HepG2 (cell line): ENCODE measurements at regions of chr4 and their contacts with region 1.

Region 1: GRCh38 chr4:25159884-25160713 is at the start of gene SEPSECS:
- DNase-seq: peak; percentile 97
- ATAC-seq: peak; percentile 85
- H3K4me3 ChIP-seq: peak within 1 kb of the TSS; percentile 70 to 84 (median 79)
- H3K27ac ChIP-seq: peak within 1 kb of the TSS; percentile 99
- H3K4me1 ChIP-seq: peaks cover 58% of the 10 kb centered on the region
- H3K27me3 ChIP-seq: no peaks in the 10 kb centered on the region; a peak in 1 of 5 replicates
- CTCF ChIP-seq: peak; percentile 30
- EP300 ChIP-seq: peak in 1 of 2 experiments; percentile 29; a peak in 1 of 4 replicates
- POLR2A ChIP-seq: peak; percentile 81 to 91
- RAD21 ChIP-seq: 0 out of 2 replicates have a peak, but pooled peaks have one; percentile 25
- total RNA-seq, gene SEPSECS: 14.3 and 17.1 TPM in 2 replicates

Region 2: GRCh38 chr4:25123236-25123635 is 36.9 kb before region 1 on chr4:
- CTCF ChIA-PET with region 1: no interaction called
- POLR2A ChIA-PET with region 1: no interaction called
- in situ Hi-C with region 1: no loop called
- intact Hi-C with region 1: no loop called
- DNase-seq: no peak
- ATAC-seq: no peak
- H3K4me3 ChIP-seq: no peak overlapping the region
- H3K27ac ChIP-seq: no peak overlapping the region
- H3K4me1 ChIP-seq: no peaks in the 10 kb centered on the region
- H3K27me3 ChIP-seq: no peaks in the 10 kb centered on the region
- CTCF ChIP-seq: no peak
- EP300 ChIP-seq: no peak
- POLR2A ChIP-seq: no peak
- RAD21 ChIP-seq: no peak

Region 3: DNA sequence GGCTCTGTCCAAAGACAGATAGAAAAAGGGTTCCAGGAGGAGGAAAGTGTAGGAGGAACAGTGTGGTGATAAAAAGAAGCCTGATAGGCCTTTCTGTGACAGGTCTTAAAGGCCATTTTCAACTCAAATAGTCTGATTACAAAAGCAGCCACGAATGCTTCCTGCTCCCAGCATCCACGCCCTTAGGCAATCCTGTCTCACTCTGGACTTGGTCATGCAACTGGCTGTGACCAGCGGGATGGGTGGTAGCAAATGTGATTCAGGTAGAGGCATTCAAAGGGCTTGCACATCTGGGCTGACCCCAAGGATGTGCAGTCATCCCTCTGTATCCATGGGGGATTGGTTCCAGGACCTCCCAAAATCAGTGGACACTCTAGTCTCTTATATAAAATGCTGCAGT is 14.6 kb after region 1 on chr4:
- CTCF ChIA-PET with region 1: no interaction called
- POLR2A ChIA-PET with region 1: interaction called, 23 read pairs
- in situ Hi-C with region 1: no loop called
- intact Hi-C with region 1: no loop called
- DNase-seq: no peak
- ATAC-seq: no peak
- H3K4me3 ChIP-seq: no peak overlapping the region
- H3K27ac ChIP-seq: no peak overlapping the region
- H3K4me1 ChIP-seq: peaks cover 35% of the 10 kb centered on the region
- H3K27me3 ChIP-seq: no peaks in the 10 kb centered on the region
- CTCF ChIP-seq: no peak
- EP300 ChIP-seq: no peak
- POLR2A ChIP-seq: no peak
- RAD21 ChIP-seq: no peak

Region 4: DNA sequence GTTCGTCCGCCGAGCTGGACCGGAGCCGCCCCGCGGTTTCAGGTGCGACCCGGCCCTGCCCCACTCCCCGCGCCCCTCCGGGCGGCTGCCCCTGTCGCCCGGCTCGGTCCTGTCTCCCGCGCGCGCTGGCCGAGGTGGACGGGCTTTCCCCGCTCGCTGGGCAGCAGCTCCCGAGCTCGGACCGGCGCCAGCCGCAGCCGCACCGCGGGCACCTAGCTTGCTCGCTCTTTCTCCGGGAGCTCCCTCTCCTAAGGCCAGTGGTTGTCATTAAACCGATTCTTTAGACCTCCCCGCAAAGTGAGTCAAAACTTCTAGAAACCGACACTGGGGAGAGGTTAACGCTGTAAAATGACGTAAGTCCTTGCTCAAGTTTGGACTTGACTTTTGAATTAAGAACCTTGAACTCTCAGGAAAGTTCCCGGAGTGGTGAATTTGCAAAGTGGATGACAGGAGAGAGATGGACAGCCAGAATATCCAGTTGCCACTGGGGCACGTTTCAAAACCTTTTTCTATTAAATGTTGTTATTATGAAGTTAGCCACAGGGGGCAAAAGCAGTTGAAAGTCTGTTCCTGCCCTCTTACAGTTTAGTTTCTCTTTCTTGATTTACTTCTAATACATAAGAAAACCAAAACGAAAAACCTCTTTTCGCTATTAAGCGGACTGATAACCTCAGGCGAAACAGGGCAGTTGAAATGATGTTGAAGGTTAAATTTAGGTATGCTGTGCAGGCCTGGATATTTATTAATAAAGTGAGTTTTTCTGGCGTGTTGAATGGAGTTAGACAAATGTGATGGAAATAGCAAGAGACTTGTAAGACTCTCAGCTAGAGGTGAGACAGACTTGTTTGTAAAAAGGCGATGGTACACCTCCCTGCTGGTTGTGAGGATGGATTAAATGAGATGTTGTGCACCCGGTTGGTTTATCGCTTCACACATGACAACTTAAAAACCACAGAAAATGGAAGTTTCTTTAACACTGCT is 74.6 kb after region 1 on chr4:
- CTCF ChIA-PET with region 1: no interaction called
- POLR2A ChIA-PET with region 1: interaction called, 30 read pairs
- in situ Hi-C with region 1: no loop called
- intact Hi-C with region 1: loop called (anchors 5 kb)
- DNase-seq: peak; percentile 89
- ATAC-seq: peak; percentile 79
- H3K4me3 ChIP-seq: peak overlapping the region; percentile 84 to 98 (median 91)
- H3K27ac ChIP-seq: peak overlapping the region; percentile 79
- H3K4me1 ChIP-seq: peaks cover 35% of the 10 kb centered on the region
- H3K27me3 ChIP-seq: no peaks in the 10 kb centered on the region; a peak in 1 of 5 replicates
- CTCF ChIP-seq: peak; percentile 33
- EP300 ChIP-seq: no peak
- POLR2A ChIP-seq: peak in 1 of 2 experiments; percentile 42; a peak in 1 of 4 replicates
- RAD21 ChIP-seq: no peak

Region 5: DNA sequence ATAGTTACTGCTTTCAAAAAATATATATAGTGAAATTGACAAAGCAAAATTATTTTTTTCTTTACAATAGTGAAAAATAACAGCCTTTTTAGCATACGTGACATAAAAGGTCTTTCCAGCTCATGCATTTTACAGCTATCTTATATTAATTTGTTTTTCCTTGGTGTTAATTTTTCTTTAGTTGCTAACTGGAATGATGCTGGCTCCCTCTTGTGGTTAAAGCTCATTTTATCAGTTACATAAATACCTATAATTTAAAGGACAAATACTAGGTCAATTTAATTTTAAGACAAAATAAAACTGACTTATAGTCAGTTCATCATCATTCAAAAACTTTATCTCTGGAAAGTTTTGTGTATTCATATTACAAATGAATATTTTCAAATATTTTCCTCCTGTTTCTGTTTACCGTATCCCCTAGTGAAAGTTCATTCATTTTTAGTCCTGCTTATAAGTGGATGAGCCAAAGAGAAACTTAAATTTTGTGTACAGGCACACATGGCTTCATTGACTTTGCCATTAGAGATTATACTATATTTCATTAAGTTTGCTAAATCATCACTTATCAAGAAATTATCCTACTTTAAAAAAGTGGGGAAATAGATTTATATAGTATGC is 207.0 kb after region 1 on chr4:
- CTCF ChIA-PET with region 1: no interaction called
- POLR2A ChIA-PET with region 1: no interaction called
- in situ Hi-C with region 1: no loop called
- intact Hi-C with region 1: loop called (anchors 5 kb)
- DNase-seq: no peak
- ATAC-seq: no peak
- H3K4me3 ChIP-seq: no peak overlapping the region
- H3K27ac ChIP-seq: no peak overlapping the region
- H3K4me1 ChIP-seq: peaks cover 24% of the 10 kb centered on the region
- H3K27me3 ChIP-seq: no peaks in the 10 kb centered on the region
- CTCF ChIP-seq: peak; percentile 42
- EP300 ChIP-seq: no peak
- POLR2A ChIP-seq: no peak
- RAD21 ChIP-seq: no peak